Mammary epithelial cell (primary cell): ENCODE measurements at regions of chr19 and their contacts with region 1.

Region 1: GRCh38 chr19:18000935-18001778 is 6.8 kb upstream of the ARRDC2 start:
- DNase-seq: peak; percentile 84
- H3K4me3 ChIP-seq: peak overlapping the region; percentile 66 to 84 (median 75)
- H3K27ac ChIP-seq: peak overlapping the region; percentile 46
- H3K4me1 ChIP-seq: peaks cover 4% of the 10 kb centered on the region
- H3K27me3 ChIP-seq: no peaks in the 10 kb centered on the region
- CTCF ChIP-seq: no peak

Region 2: GRCh38 chr19:17873786-17874757 is 127.1 kb before region 1 on chr19:
- CTCF ChIA-PET with region 1: no interaction called
- dilution Hi-C with region 1: no loop called
- in situ Hi-C with region 1: loop called in 1 of 2 experiments (anchors 10 kb)
- intact Hi-C with region 1: loop called (anchors 1 kb)
- DNase-seq: peak; percentile 37
- H3K4me3 ChIP-seq: peak overlapping the region in 2 of 3 experiments; percentile 2 to 6
- H3K27ac ChIP-seq: no peak overlapping the region
- H3K4me1 ChIP-seq: peaks cover 5% of the 10 kb centered on the region
- H3K27me3 ChIP-seq: peaks cover 9% of the 10 kb centered on the region
- CTCF ChIP-seq: no peak

Region 3: GRCh38 chr19:17886515-17886914 is 114.6 kb before region 1 on chr19:
- CTCF ChIA-PET with region 1: no interaction called
- dilution Hi-C with region 1: no loop called
- in situ Hi-C with region 1: no loop called
- intact Hi-C with region 1: no loop called
- DNase-seq: no peak
- H3K4me3 ChIP-seq: no peak overlapping the region
- H3K27ac ChIP-seq: no peak overlapping the region
- H3K4me1 ChIP-seq: no peaks in the 10 kb centered on the region
- H3K27me3 ChIP-seq: no peaks in the 10 kb centered on the region
- CTCF ChIP-seq: no peak

Region 4: GRCh38 chr19:17938092-17938845 is 62.9 kb before region 1 on chr19:
- CTCF ChIA-PET with region 1: interaction called, 16 read pairs
- dilution Hi-C with region 1: no loop called
- in situ Hi-C with region 1: loop called in 1 of 2 experiments (anchors 5 kb)
- intact Hi-C with region 1: loop called (anchors 1 kb)
- DNase-seq: peak; percentile 90
- H3K4me3 ChIP-seq: no peak overlapping the region
- H3K27ac ChIP-seq: no peak overlapping the region
- H3K4me1 ChIP-seq: peaks cover 11% of the 10 kb centered on the region
- H3K27me3 ChIP-seq: no peaks in the 10 kb centered on the region
- CTCF ChIP-seq: peak; percentile 93 to 99

Region 5: DNA sequence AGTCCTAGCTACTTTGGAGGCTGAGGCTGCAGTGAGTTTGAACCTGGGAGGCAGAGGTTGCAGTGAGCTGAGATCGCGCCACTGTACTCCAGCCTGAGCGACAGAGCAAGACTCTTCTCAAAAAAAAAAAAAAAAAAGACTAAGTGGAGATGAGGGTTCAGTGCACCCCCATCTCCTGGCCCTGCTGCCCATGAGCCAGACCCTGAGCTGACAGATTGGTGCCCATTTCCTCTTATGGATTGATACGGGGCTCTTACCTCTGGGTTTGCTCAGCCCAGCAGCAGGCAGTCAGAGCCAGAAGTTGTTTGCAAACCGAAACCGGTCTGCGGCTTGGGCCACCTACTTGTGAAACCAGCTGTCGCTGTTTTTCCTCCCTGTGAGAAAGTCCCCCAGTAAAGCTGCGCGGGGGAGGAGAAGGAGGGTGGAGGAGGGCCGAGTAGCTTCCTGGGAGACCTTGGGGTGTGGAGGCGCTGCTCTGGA is 43.7 kb after region 1 on chr19:
- CTCF ChIA-PET with region 1: no interaction called
- dilution Hi-C with region 1: loop called (anchors 5 kb)
- in situ Hi-C with region 1: no loop called
- intact Hi-C with region 1: no loop called
- DNase-seq: peak; percentile 83
- H3K4me3 ChIP-seq: peak overlapping the region in 2 of 3 experiments; percentile 9 to 16
- H3K27ac ChIP-seq: no peak overlapping the region
- H3K4me1 ChIP-seq: peaks cover 11% of the 10 kb centered on the region
- H3K27me3 ChIP-seq: no peaks in the 10 kb centered on the region
- CTCF ChIP-seq: no peak